ENCODE measurements at regions of chrX and their contacts with region 1.

Region 1: GRCh38 chrX:41116948-41117347 is 31.7 kb downstream of the USP9X start:
- DNase-seq: no peak
- ATAC-seq: peak in 1 of 2 donors; percentile 15
- H3K4me3 ChIP-seq: no peak overlapping the region
- H3K27ac ChIP-seq: peak overlapping the region in 1 of 4 donors; percentile 50
- H3K4me1 ChIP-seq: peaks cover 32 to 43% of the 10 kb centered on the region in 2 donors
- H3K27me3 ChIP-seq: no peaks in the 10 kb centered on the region
- CTCF ChIP-seq: no peak
- POLR2A ChIP-seq: no peak

Region 2: DNA sequence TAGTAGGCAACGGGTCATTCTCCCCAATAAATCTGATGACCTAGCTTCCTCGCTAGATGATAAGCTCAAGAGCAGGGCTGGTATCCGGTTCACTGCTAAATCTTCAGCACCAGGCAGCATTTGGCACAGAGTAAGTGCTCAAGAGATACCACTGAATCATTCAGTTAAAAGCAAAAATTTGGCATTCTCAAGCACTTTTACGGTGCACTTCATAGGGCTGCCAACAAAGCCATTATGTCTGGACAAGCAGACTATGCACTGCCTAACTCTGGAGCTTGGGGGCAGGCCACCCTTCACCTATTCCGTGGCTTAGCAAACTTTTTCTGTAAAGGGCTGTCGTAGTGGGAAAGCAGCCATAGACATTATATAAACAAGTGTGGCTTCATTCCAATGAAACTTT is 445.8 kb before region 1 on chrX:
- in situ Hi-C with region 1: loop called in 2 of 4 experiments (anchors 10 to 25 kb)
- intact Hi-C with region 1: no loop called
- DNase-seq: no peak
- ATAC-seq: no peak
- H3K4me3 ChIP-seq: no peak overlapping the region
- H3K27ac ChIP-seq: peak overlapping the region in 1 of 4 donors; percentile 58
- H3K4me1 ChIP-seq: peaks cover 0 to 6% of the 10 kb centered on the region in 2 donors
- H3K27me3 ChIP-seq: no peaks in the 10 kb centered on the region
- CTCF ChIP-seq: peak in 1 of 5 experiments; percentile 14
- POLR2A ChIP-seq: no peak

Region 3: GRCh38 chrX:40877887-40878286 is 239.1 kb before region 1 on chrX:
- in situ Hi-C with region 1: loop called (anchors 5 to 10 kb)
- intact Hi-C with region 1: loop called (anchors 2 kb)
- DNase-seq: no peak
- ATAC-seq: no peak
- H3K4me3 ChIP-seq: no peak overlapping the region
- H3K27ac ChIP-seq: no peak overlapping the region
- H3K4me1 ChIP-seq: peaks cover 0 to 4% of the 10 kb centered on the region in 2 donors
- H3K27me3 ChIP-seq: peaks cover 0 to 2% (median 0%) of the 10 kb centered on the region in 3 donors
- CTCF ChIP-seq: peak in 3 of 5 experiments; percentile 43 to 49 (median 45)
- POLR2A ChIP-seq: no peak

Region 4: DNA sequence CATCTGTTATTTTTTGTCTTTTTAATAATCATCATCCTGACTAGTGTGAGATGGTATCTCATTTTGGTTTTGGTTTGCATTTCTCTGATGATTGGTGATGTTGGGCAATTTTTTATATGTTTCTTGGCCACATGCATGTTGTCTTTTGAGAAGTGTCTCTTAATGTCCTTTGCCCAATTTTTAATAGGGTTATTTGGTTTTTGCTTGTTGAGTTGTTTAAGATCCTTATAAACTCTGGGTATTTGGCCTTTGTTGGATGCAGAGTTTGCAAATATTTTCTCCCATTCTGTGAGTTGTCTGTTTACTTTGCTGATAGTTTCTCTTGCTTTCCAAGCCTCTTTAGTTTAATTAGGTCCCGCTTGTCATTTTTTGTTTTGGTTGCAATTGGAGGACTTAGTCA is 229.5 kb before region 1 on chrX:
- in situ Hi-C with region 1: loop called in 1 of 4 experiments (anchors 10 kb)
- intact Hi-C with region 1: no loop called
- DNase-seq: no peak
- ATAC-seq: no peak
- H3K4me3 ChIP-seq: no peak overlapping the region
- H3K27ac ChIP-seq: no peak overlapping the region
- H3K4me1 ChIP-seq: no peaks in the 10 kb centered on the region
- H3K27me3 ChIP-seq: no peaks in the 10 kb centered on the region
- CTCF ChIP-seq: no peak
- POLR2A ChIP-seq: no peak

Region 5: DNA sequence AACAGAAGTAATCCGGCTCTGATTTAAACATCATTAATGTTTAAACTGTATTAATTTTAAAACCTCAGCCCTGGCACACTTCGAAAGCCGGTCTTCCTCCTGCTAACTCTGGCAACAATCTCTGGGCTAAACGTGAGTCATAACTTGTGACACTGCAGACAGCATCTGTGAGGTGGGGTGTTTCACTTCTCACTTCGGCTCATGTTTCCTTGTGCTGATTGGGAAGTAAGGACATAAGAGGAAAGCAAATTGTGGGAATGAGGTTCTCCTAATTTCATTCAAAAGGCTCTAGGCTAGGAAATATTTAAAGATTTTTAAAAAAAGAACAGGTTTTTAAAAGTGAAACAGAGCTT is 171.6 kb before region 1 on chrX:
- in situ Hi-C with region 1: no loop called
- intact Hi-C with region 1: loop called (anchors 10 kb)
- DNase-seq: peak; percentile 72 to 80
- ATAC-seq: peak; percentile 98 to 99
- H3K4me3 ChIP-seq: no peak overlapping the region
- H3K27ac ChIP-seq: peak overlapping the region; percentile 77 to 86 (median 81)
- H3K4me1 ChIP-seq: peaks cover 0 to 5% of the 10 kb centered on the region in 2 donors
- H3K27me3 ChIP-seq: no peaks in the 10 kb centered on the region
- CTCF ChIP-seq: no peak
- POLR2A ChIP-seq: peak in 1 of 2 donors; percentile 10

Region 6: GRCh38 chrX:41167888-41168287 is 50.9 kb after region 1 on chrX:
- in situ Hi-C with region 1: no loop called
- intact Hi-C with region 1: no loop called
- DNase-seq: no peak
- ATAC-seq: no peak
- H3K4me3 ChIP-seq: no peak overlapping the region
- H3K27ac ChIP-seq: peak overlapping the region in 1 of 4 donors; percentile 4
- H3K4me1 ChIP-seq: peaks cover 0 to 2% of the 10 kb centered on the region in 2 donors
- H3K27me3 ChIP-seq: no peaks in the 10 kb centered on the region
- CTCF ChIP-seq: no peak
- POLR2A ChIP-seq: no peak

Measured in gastrocnemius medialis (tissue), 4 donors.